ENCODE measurements at regions of chr18 and their contacts with region 1.

Region 1: DNA sequence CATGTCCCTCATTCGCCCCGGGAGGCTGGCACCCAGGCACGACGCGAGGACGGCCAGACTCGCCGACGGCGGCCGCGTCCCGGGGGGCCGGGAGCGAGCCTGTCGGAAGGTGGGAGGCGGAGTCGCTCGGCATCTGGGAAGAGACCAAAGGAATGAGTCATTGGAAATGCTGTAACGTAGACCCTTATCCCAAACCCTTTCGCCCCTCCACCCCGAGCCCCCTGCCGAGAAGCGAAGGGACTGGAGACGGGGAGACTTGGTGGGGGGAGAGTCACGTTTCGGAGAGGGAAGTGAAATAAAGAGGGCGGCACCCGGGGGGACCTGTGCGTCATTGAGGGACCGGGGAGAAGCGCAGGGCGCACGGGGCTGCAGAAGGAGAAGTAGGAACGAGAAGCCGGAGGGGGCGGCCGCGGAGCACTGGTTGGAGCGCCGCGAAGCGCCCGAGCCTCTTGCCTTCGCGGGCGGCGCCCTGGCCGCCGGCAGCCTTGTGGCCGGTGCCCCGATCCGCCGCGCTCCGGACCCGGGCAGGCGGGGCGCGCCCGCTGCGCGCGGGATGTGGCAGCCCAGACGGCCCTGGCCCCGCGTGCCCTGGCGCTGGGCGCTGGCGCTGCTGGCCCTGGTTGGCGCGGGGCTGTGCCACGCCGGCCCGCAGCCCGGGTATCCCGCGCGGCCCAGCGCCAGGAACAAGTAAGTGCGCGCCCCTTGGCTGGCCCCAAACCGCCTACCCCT is at the start of gene EMILIN2:
- DNase-seq: peak; percentile 22 to 52 (median 35)
- ATAC-seq: peak; percentile 79
- H3K4me3 ChIP-seq: peak within 1 kb of the TSS; percentile 54
- H3K4me3 Mint-ChIP-seq: peak within 1 kb of the TSS; percentile 81 to 93 (median 90)
- H3K27ac ChIP-seq: no peak within 1 kb of the TSS
- H3K27ac Mint-ChIP-seq: peak within 1 kb of the TSS in 5 of 9 donors; percentile 22 to 91 (median 65)
- H3K4me1 ChIP-seq: peaks cover 0 to 12% of the 10 kb centered on the region in 2 donors
- H3K4me1 Mint-ChIP-seq: peaks cover 17 to 28% (median 21%) of the 10 kb centered on the region in 7 donors
- H3K27me3 ChIP-seq: peaks cover 10 to 15% of the 10 kb centered on the region in 2 donors
- H3K27me3 Mint-ChIP-seq: peaks cover 19 to 55% (median 47%) of the 10 kb centered on the region in 5 donors
- total RNA-seq, gene EMILIN2: 6.2 to 51.1 (median 16.9) TPM

Region 2: GRCh38 chr18:2805970-2806943 is 40.5 kb before region 1 on chr18:
- CTCF ChIA-PET with region 1: no interaction called
- POLR2A ChIA-PET with region 1: no interaction called
- intact Hi-C with region 1: loop called in 1 of 2 experiments (anchors 5 kb)
- DNase-seq: no peak
- ATAC-seq: no peak
- H3K4me3 ChIP-seq: no peak overlapping the region
- H3K4me3 Mint-ChIP-seq: no peak overlapping the region
- H3K27ac ChIP-seq: no peak overlapping the region
- H3K27ac Mint-ChIP-seq: peak overlapping the region in 6 of 9 donors; percentile 15 to 81 (median 56)
- H3K4me1 ChIP-seq: no peaks in the 10 kb centered on the region
- H3K4me1 Mint-ChIP-seq: no peaks in the 10 kb centered on the region
- H3K27me3 ChIP-seq: no peaks in the 10 kb centered on the region
- H3K27me3 Mint-ChIP-seq: no peaks in the 10 kb centered on the region

Region 3: DNA sequence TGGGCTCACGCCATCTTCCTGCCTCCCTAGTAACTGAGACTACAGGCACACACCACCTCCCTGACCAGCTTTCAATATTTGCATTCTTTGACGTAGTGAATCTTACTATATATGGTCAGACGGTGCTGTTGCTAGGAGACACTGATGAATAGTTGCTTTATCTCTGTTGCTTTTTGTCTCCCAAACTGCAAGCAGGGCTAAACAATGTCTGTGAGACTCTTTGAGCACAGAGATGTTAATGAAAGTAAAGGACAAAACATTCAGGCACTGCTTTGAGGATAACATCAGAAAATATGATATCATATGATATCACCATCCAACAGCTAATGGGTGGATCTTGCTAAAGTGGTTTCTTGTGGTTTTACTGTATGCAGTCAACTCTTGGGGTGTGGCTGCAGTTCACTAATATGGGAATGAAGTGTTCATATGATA is 43.0 kb after region 1 on chr18:
- CTCF ChIA-PET with region 1: no interaction called
- POLR2A ChIA-PET with region 1: interaction called, 6 read pairs
- intact Hi-C with region 1: loop called (anchors 5 kb)
- DNase-seq: peak in 5 of 9 donors; percentile 37 to 56 (median 39)
- ATAC-seq: peak; percentile 85
- H3K4me3 ChIP-seq: no peak overlapping the region
- H3K4me3 Mint-ChIP-seq: peak overlapping the region in 8 of 10 donors; percentile 11 to 86 (median 72)
- H3K27ac ChIP-seq: no peak overlapping the region
- H3K27ac Mint-ChIP-seq: peak overlapping the region; percentile 31 to 88 (median 75)
- H3K4me1 ChIP-seq: peaks cover 19 to 29% of the 10 kb centered on the region in 2 donors
- H3K4me1 Mint-ChIP-seq: peaks cover 39 to 65% (median 59%) of the 10 kb centered on the region in 7 donors
- H3K27me3 ChIP-seq: no peaks in the 10 kb centered on the region
- H3K27me3 Mint-ChIP-seq: no peaks in the 10 kb centered on the region

Region 4: DNA sequence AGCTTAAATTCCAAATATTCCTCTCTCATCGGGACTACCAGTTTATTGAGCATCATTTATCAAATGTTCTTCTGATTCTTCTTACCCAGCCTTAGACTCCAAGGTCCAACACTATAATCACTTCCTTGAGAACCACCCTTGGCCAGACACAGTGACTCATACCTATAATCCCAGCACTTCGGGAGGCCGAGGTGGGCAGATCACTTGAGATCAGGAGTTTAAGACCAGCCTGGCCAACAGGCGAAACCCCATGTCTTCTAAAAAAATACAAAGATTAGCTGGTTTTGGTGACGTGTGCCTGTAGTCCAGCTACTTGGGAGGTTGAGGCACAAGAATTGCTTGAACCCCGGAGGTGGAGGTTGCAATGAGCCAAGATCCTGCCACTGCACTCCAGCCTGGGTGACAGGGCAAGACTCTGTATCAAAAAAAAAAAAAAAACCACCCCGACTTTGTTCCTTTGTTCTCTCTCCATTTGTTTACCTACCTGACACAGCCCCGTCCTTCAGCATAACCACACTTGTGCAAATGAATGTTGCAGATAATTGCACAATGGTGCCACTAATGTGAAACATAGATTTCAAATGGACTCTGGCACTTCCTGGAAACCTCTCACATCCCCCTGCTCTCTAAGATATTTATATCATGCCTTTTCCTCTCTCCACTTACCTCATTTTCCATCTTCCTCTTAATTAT is 205.1 kb after region 1 on chr18:
- CTCF ChIA-PET with region 1: no interaction called
- POLR2A ChIA-PET with region 1: no interaction called
- intact Hi-C with region 1: no loop called
- DNase-seq: no peak
- ATAC-seq: peak; percentile 38
- H3K4me3 ChIP-seq: peak overlapping the region; percentile 10
- H3K4me3 Mint-ChIP-seq: peak overlapping the region in 9 of 10 donors; percentile 0 to 76 (median 42)
- H3K27ac ChIP-seq: no peak overlapping the region
- H3K27ac Mint-ChIP-seq: peak overlapping the region; percentile 3 to 75 (median 51)
- H3K4me1 ChIP-seq: peaks cover 5 to 26% of the 10 kb centered on the region in 2 donors
- H3K4me1 Mint-ChIP-seq: peaks cover 27 to 46% (median 40%) of the 10 kb centered on the region in 7 donors
- H3K27me3 ChIP-seq: no peaks in the 10 kb centered on the region
- H3K27me3 Mint-ChIP-seq: no peaks in the 10 kb centered on the region

Measured in naive thymus-derived CD4-positive, alpha-beta T cell (primary cell).